ENCODE measurements at regions of chr22 and their contacts with region 1.

Region 1: GRCh38 chr22:39319270-39320022 is at the start of gene RPL3:
- DNase-seq: peak; percentile 97 to 98 (median 98)
- H3K4me3 ChIP-seq: peak within 1 kb of the TSS; percentile 87 to 97
- H3K4me3 Mint-ChIP-seq: peak within 1 kb of the TSS; percentile 98 to 100 (median 100)
- H3K27ac ChIP-seq: peak within 1 kb of the TSS; percentile 83
- H3K27ac Mint-ChIP-seq: peak within 1 kb of the TSS; percentile 98 to 99 (median 99)
- H3K4me1 ChIP-seq: peaks cover 44% of the 10 kb centered on the region
- H3K4me1 Mint-ChIP-seq: peaks cover 25 to 55% (median 43%) of the 10 kb centered on the region in 4 donors
- H3K27me3 ChIP-seq: no peaks in the 10 kb centered on the region
- H3K27me3 Mint-ChIP-seq: no peaks in the 10 kb centered on the region
- total RNA-seq, gene RPL3: 3,492 to 3,635 TPM

Region 2: GRCh38 chr22:38705235-38706100 is 614.0 kb before region 1 on chr22 and contains the start of gene GTPBP1:
- CTCF ChIA-PET with region 1: no interaction called
- POLR2A ChIA-PET with region 1: interaction called, 14 read pairs
- intact Hi-C with region 1: loop called (anchors 5 kb)
- DNase-seq: peak; percentile 96 to 100 (median 100)
- H3K4me3 ChIP-seq: peak within 1 kb of the TSS; percentile 20 to 94
- H3K4me3 Mint-ChIP-seq: peak within 1 kb of the TSS; percentile 91 to 96 (median 94)
- H3K27ac ChIP-seq: peak within 1 kb of the TSS; percentile 94
- H3K27ac Mint-ChIP-seq: peak within 1 kb of the TSS; percentile 92 to 99 (median 98)
- H3K4me1 ChIP-seq: peaks cover 52% of the 10 kb centered on the region
- H3K4me1 Mint-ChIP-seq: peaks cover 48 to 69% (median 53%) of the 10 kb centered on the region in 4 donors
- H3K27me3 ChIP-seq: no peaks in the 10 kb centered on the region
- H3K27me3 Mint-ChIP-seq: peaks cover 0 to 4% of the 10 kb centered on the region in 2 donors
- total RNA-seq, gene GTPBP1: 94.1 to 96.6 TPM

Region 3: GRCh38 chr22:39152511-39153219 is 166.8 kb before region 1 on chr22 and contains the start of gene CBX7:
- CTCF ChIA-PET with region 1: interaction called, 80 read pairs
- POLR2A ChIA-PET with region 1: no interaction called
- intact Hi-C with region 1: loop called (anchors 1 kb)
- DNase-seq: peak; percentile 90 to 96 (median 94)
- H3K4me3 ChIP-seq: peak within 1 kb of the TSS; percentile 55 to 79
- H3K4me3 Mint-ChIP-seq: peak within 1 kb of the TSS; percentile 84 to 91 (median 88)
- H3K27ac ChIP-seq: peak within 1 kb of the TSS; percentile 78
- H3K27ac Mint-ChIP-seq: peak within 1 kb of the TSS; percentile 88 to 99 (median 93)
- H3K4me1 ChIP-seq: peaks cover 51% of the 10 kb centered on the region
- H3K4me1 Mint-ChIP-seq: peaks cover 22 to 48% (median 35%) of the 10 kb centered on the region in 4 donors
- H3K27me3 ChIP-seq: peaks cover 7% of the 10 kb centered on the region
- H3K27me3 Mint-ChIP-seq: peaks cover 0 to 3% of the 10 kb centered on the region in 2 donors
- total RNA-seq, gene CBX7: 181 to 198 TPM

Region 4: DNA sequence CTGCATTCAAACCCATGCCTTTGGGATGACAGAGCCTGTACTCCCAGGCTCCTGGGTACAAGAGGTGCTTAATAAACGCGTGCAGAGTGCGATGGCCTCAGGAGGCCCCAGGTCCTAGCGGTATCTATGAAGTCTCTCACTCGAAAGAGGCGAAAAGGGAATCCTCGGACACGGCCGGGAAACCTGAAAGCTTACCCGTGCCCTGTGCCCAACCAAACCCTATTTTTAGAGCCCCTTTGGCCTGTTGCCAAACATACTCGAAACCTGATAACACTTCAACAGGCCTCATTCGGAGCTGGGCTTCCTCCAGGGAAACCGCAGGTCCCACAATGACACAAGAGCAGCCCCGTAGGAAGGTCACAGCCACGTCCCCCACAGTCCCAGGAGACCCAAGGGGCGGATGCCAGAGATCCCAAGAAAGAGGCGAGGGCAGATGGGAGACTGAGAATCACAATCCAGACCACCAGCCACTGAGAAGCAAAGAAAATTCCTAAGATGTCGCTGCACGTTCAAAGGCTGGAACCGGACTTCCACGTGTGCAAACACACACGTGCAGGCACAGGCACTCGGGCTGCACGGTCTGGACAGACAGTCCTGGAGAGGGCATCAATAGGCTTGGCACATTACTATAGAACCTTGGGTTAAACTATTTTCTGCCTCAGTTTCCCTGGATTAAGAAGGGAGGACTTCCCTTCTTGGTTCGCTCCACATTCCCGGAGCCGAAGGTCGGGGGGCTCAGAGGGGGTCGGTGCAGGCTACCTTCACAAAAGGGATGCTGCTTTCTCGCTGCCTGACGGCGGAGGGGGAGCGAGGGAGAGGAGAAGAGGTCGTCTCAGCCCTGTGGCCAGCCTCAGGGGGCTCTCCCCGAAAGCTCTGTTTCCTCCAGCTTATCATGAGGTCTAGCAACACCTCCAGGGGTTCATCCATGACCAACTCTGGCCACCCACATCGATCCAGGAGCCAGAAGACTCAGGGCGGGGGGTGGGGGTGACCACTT is 82.8 kb before region 1 on chr22:
- CTCF ChIA-PET with region 1: interaction called, 5 read pairs
- POLR2A ChIA-PET with region 1: interaction called, 163 read pairs
- intact Hi-C with region 1: no loop called
- DNase-seq: peak; percentile 61 to 77 (median 65)
- H3K4me3 ChIP-seq: peak overlapping the region; percentile 12 to 22
- H3K4me3 Mint-ChIP-seq: peak overlapping the region; percentile 55 to 93 (median 82)
- H3K27ac ChIP-seq: no peak overlapping the region
- H3K27ac Mint-ChIP-seq: peak overlapping the region; percentile 50 to 99 (median 81)
- H3K4me1 ChIP-seq: peaks cover 71% of the 10 kb centered on the region
- H3K4me1 Mint-ChIP-seq: peaks cover 37 to 75% (median 55%) of the 10 kb centered on the region in 4 donors
- H3K27me3 ChIP-seq: no peaks in the 10 kb centered on the region
- H3K27me3 Mint-ChIP-seq: peaks cover 5 to 9% of the 10 kb centered on the region in 2 donors

Region 5: GRCh38 chr22:39332441-39333064 is 13.1 kb after region 1 on chr22:
- CTCF ChIA-PET with region 1: interaction called, 15 read pairs
- POLR2A ChIA-PET with region 1: interaction called, 43 read pairs
- intact Hi-C with region 1: no loop called
- DNase-seq: no peak
- H3K4me3 ChIP-seq: no peak overlapping the region
- H3K4me3 Mint-ChIP-seq: no peak overlapping the region
- H3K27ac ChIP-seq: no peak overlapping the region
- H3K27ac Mint-ChIP-seq: peak overlapping the region in 3 of 7 donors; percentile 23 to 64 (median 36)
- H3K4me1 ChIP-seq: no peaks in the 10 kb centered on the region
- H3K4me1 Mint-ChIP-seq: peaks cover 0 to 17% (median 4%) of the 10 kb centered on the region in 4 donors
- H3K27me3 ChIP-seq: no peaks in the 10 kb centered on the region
- H3K27me3 Mint-ChIP-seq: peaks cover 0 to 1% of the 10 kb centered on the region in 2 donors

Region 6: GRCh38 chr22:39364714-39365491 is 45.5 kb after region 1 on chr22:
- CTCF ChIA-PET with region 1: no interaction called
- POLR2A ChIA-PET with region 1: no interaction called
- intact Hi-C with region 1: no loop called
- DNase-seq: no peak
- H3K4me3 ChIP-seq: no peak overlapping the region
- H3K4me3 Mint-ChIP-seq: no peak overlapping the region
- H3K27ac ChIP-seq: no peak overlapping the region
- H3K27ac Mint-ChIP-seq: no peak overlapping the region
- H3K4me1 ChIP-seq: no peaks in the 10 kb centered on the region
- H3K4me1 Mint-ChIP-seq: peaks cover 0 to 3% (median under 1%) of the 10 kb centered on the region in 4 donors
- H3K27me3 ChIP-seq: no peaks in the 10 kb centered on the region
- H3K27me3 Mint-ChIP-seq: no peaks in the 10 kb centered on the region

Region 7: DNA sequence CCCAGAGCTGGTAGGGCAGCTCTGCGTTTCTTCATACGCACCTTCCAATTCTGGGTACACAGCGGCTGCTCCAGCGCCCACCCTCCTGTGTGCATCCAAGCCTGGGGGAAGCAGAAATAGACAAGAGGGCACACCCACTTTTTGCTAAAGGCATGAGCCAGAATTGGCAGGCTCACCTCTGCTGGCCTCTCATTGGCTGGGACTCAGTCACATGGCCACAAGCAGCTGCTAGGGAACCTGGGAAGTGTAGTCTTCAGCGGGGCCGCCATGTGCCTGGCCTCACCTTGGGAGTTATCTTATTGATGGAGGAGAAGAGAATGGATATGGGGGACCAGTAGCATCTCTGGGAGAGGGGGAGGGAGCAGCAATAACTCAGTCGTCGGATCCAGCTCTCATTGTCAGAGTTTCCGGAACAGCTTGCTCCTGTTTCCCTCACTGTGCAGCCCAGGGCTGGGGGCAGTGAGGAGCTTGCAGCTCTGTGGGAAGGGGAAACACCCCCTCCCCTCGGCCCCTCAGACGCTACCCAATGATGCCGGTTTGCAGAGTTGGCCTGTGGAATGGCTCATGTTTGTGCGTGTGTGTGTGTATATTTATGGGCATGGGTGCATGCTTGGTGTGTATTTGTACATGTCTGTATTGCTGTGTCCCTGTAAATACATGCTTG is 170.8 kb after region 1 on chr22:
- CTCF ChIA-PET with region 1: interaction called, 3 read pairs
- POLR2A ChIA-PET with region 1: interaction called, 10 read pairs
- intact Hi-C with region 1: no loop called
- DNase-seq: peak; percentile 66 to 83 (median 77)
- H3K4me3 ChIP-seq: no peak overlapping the region
- H3K4me3 Mint-ChIP-seq: peak overlapping the region in 2 of 8 donors; percentile 17 to 71
- H3K27ac ChIP-seq: no peak overlapping the region
- H3K27ac Mint-ChIP-seq: peak overlapping the region in 6 of 7 donors; percentile 10 to 81 (median 44)
- H3K4me1 ChIP-seq: peaks cover 6% of the 10 kb centered on the region
- H3K4me1 Mint-ChIP-seq: peaks cover 5 to 13% (median 9%) of the 10 kb centered on the region in 4 donors
- H3K27me3 ChIP-seq: no peaks in the 10 kb centered on the region
- H3K27me3 Mint-ChIP-seq: no peaks in the 10 kb centered on the region

Region 8: DNA sequence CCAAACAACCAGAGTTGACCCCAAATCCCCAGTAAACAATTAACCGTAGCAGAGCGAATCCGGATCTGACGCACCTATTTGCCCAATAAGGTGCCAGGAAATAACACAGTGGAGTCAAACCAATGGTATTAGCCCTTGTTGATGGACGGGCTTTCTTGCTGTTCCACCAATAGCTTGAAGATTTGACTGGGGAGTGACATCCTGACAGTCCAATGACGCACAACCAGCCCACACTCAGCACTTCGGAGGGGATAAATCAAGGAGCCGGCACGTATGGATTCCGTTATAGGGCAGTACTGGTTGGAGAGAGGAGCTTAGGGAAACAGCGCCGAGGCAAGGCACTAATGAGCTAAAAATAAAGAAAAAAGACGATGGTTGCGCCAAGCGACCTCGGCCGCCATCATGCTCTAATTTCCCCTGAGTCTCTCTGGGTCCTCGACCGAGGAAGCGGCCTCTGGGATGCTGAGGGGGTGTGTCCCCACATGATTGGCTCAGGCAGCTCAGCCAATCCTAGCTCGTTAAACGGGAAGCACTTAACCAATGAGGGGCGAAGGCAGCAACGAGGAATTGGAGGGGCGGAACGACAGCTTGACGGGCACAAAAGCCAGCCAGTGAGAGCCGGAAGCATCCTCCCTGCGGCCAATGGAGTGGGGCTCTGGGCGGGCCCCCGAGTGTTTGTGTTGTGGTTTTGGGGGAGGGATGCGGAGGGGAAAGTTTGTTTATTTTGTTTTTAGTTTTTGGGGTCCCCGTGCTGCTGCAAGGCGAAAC is 724.8 kb after region 1 on chr22:
- CTCF ChIA-PET with region 1: interaction called, 4 read pairs
- POLR2A ChIA-PET with region 1: interaction called, 29 read pairs
- intact Hi-C with region 1: no loop called
- DNase-seq: peak; percentile 99 to 100 (median 99)
- H3K4me3 ChIP-seq: peak overlapping the region; percentile 60 to 67
- H3K4me3 Mint-ChIP-seq: peak overlapping the region; percentile 95 to 100 (median 98)
- H3K27ac ChIP-seq: peak overlapping the region; percentile 88
- H3K27ac Mint-ChIP-seq: peak overlapping the region; percentile 99 to 100 (median 100)
- H3K4me1 ChIP-seq: peaks cover 32% of the 10 kb centered on the region
- H3K4me1 Mint-ChIP-seq: peaks cover 22 to 47% (median 36%) of the 10 kb centered on the region in 4 donors
- H3K27me3 ChIP-seq: no peaks in the 10 kb centered on the region
- H3K27me3 Mint-ChIP-seq: peaks cover 4 to 10% of the 10 kb centered on the region in 2 donors

Measured in CD4-positive, alpha-beta memory T cell (primary cell).